Breast epithelium (tissue), 4 donors: ENCODE measurements at regions of chr7 and their contacts with region 1.

Region 1: GRCh38 chr7:24227603-24228359 is 56.2 kb upstream of the NPY start:
- DNase-seq: no peak
- H3K4me3 ChIP-seq: no peak overlapping the region
- H3K27ac ChIP-seq: no peak overlapping the region
- H3K4me1 ChIP-seq: no peaks in the 10 kb centered on the region
- H3K27me3 ChIP-seq: no peaks in the 10 kb centered on the region
- CTCF ChIP-seq: no peak
- POLR2A ChIP-seq: no peak

Region 2: DNA sequence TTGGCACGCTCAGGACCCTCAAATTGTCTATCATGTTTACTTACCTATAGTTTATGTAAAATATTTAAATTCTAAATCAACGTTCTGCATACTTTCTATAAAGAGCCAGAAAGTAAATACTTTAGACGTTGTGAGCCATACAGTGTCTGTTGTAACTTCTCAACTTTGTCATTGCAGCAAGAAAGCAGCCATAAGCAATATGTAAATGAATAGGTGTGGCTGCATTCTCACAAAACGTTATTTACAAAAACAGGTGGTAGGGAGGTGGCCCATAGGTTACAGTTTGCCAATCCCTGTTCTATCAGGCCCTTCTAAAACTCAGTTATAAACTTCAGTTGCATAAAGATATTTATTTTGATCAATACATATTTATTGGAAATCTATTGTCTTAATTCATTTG is 44.2 kb after region 1 on chr7:
- intact Hi-C with region 1: no loop called
- DNase-seq: no peak
- H3K4me3 ChIP-seq: no peak overlapping the region
- H3K27ac ChIP-seq: no peak overlapping the region
- H3K4me1 ChIP-seq: no peaks in the 10 kb centered on the region
- H3K27me3 ChIP-seq: no peaks in the 10 kb centered on the region
- CTCF ChIP-seq: no peak
- POLR2A ChIP-seq: no peak

Region 3: DNA sequence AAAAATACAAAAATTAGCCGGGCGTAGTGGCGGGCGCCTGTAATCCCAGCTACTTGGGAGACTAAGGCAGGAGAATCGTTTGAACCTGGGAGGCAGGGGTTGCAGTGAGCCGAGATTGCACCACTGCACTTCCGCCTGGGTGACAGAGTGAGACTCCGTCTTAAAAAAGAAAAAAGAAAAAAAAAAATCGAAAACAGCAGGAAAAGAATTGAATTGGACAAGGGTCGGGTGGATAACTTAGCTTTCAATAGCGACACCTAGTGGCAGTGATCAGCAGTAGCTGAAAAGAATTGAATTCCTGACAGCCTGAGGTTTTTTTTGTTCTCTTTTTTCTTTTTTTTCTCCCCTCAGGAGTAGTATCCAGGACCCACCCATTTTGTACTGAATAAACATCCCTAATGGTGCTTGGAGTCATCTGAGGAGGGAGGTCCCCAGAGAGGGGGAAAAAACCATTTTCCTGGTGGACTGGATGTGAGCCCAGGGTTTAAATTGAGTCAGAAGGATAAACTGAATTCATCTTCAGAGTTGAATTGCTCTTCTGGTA is 842.2 kb after region 1 on chr7:
- intact Hi-C with region 1: no loop called
- DNase-seq: no peak
- H3K4me3 ChIP-seq: peak overlapping the region; percentile 1 to 50 (median 14)
- H3K27ac ChIP-seq: no peak overlapping the region
- H3K4me1 ChIP-seq: no peaks in the 10 kb centered on the region
- H3K27me3 ChIP-seq: no peaks in the 10 kb centered on the region
- CTCF ChIP-seq: peak; percentile 78 to 88 (median 79)
- POLR2A ChIP-seq: no peak

Region 4: GRCh38 chr7:25149836-25150235 is 922.1 kb after region 1 on chr7:
- intact Hi-C with region 1: loop called (anchors 10 kb)
- DNase-seq: no peak
- H3K4me3 ChIP-seq: no peak overlapping the region
- H3K27ac ChIP-seq: no peak overlapping the region
- H3K4me1 ChIP-seq: no peaks in the 10 kb centered on the region
- H3K27me3 ChIP-seq: no peaks in the 10 kb centered on the region
- CTCF ChIP-seq: no peak
- POLR2A ChIP-seq: no peak